Cardiac septum (tissue), 1 donor: ENCODE measurements at regions of chr15 and their contacts with region 1.

Region 1: DNA sequence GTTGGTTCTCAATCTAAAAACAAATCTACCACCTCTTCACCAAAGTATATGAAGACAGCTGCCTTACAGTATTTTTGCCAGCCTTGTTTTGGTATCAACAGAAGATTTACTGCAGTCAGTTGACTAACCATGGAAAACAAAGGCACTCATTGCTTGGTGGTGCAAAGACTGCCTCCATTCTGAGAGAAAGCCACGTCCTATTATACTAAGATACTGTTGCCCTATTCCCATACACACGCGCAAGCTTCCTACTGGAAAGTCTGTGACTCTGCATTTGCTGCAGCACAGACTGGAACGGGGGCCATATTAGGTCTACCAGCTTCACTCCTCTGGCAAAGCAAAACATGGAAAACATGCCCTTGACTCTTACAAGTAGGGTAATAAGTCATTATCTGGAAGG is 18.0 kb downstream of the MTMR10 start:
- DNase-seq: no peak

Region 2: DNA sequence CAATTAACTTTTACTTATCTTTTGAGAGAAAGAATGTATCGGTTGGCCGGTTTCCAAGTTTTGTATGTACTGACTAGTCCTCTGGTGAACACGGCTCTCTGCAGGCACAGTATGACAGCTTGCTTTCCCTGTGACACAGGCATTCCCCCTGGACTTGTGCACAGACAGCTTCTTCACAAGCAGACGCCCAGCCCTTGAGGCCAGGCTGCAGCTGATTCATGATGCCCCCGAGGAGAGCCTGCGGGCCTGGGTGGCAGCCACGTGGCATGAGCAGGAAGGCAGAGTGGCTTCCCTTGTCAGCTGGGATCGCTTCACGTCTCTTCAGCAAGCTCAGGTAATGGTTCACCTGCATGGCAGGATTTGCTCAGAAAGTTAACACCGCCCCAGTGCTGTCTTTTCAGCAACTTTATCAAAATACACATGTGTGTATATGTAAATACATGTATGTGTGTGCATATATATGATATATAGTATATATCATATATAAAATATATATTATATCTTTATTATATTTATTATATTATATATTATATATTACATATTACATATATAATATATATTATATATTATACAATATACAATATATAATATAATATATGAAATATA is 44.2 kb before region 1 on chr15:
- intact Hi-C with region 1: loop called (anchors 5 kb)
- DNase-seq: no peak

Region 3: DNA sequence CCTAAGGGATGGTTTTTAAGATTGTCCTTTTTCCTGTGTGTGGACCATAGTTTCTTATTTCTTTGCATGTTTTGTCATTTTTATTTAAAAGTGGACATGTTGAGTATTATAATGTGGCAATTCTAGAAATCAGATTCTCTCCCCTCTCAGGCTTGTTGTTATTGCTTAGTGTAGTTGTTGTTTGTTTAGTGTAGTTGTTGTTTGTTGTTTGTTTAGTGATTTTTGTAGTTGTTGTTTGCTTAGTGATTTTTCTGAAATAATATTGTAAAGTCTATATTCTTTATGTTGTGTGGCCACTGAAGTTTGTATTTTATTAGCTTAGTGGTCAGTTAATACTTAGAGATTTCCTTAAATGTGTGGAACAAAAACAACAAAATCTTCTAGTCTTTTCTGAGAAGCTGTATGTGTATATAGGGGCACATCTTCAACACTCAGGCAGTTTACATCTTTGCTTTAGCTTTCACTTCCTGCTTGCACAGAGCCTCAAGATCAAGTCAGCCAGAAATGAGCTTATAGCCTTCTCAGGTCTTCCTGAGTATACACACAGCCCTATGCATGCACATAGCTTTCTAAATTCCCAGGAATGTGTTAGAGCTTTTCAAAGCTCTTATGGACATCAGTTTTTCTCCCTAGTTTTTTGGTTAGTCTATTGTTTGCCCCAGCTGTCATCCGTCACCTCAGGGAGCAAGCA is 40.3 kb after region 1 on chr15:
- intact Hi-C with region 1: no loop called
- DNase-seq: no peak